B cell (primary cell): ENCODE measurements at regions of chr2 and their contacts with region 1.

Region 1: DNA sequence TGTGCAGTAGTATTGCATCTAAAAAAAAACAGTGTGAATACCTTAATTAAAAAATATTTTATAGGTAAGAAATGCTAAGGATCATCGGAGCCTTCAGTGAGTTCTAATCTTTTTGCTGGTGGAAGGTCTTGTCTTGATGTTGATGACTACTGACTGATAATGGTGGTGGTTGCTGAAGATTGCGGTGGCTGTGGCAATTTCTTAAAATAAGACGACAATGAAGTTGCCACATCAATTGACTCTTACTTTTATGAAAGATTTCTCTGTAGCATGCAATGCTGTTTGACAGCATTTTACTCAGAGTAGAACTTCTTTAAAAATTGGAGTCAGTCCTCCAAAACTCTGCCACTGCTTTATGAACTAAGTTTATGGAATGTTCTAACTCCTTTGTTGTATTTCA is 36.2 kb downstream of the GLS start:
- DNase-seq: no peak
- ATAC-seq: no peak
- H3K4me3 ChIP-seq: no peak overlapping the region
- H3K4me3 Mint-ChIP-seq: no peak overlapping the region
- H3K27ac ChIP-seq: no peak overlapping the region
- H3K27ac Mint-ChIP-seq: no peak overlapping the region
- H3K4me1 ChIP-seq: no peaks in the 10 kb centered on the region
- H3K4me1 Mint-ChIP-seq: no peaks in the 10 kb centered on the region
- H3K27me3 ChIP-seq: no peaks in the 10 kb centered on the region
- H3K27me3 Mint-ChIP-seq: no peaks in the 10 kb centered on the region
- CTCF ChIP-seq: no peak

Region 2: GRCh38 chr2:190927301-190927700 is 10.5 kb after region 1 on chr2:
- CTCF ChIA-PET with region 1: no interaction called
- POLR2A ChIA-PET with region 1: no interaction called
- intact Hi-C with region 1: loop called (anchors 1 kb)
- DNase-seq: no peak
- ATAC-seq: no peak
- H3K4me3 ChIP-seq: no peak overlapping the region
- H3K4me3 Mint-ChIP-seq: no peak overlapping the region
- H3K27ac ChIP-seq: no peak overlapping the region
- H3K27ac Mint-ChIP-seq: no peak overlapping the region
- H3K4me1 ChIP-seq: no peaks in the 10 kb centered on the region
- H3K4me1 Mint-ChIP-seq: no peaks in the 10 kb centered on the region
- H3K27me3 ChIP-seq: no peaks in the 10 kb centered on the region
- H3K27me3 Mint-ChIP-seq: no peaks in the 10 kb centered on the region
- CTCF ChIP-seq: no peak